Caco-2 (cell line): ENCODE measurements at regions of chr4 and their contacts with region 1.

Region 1: DNA sequence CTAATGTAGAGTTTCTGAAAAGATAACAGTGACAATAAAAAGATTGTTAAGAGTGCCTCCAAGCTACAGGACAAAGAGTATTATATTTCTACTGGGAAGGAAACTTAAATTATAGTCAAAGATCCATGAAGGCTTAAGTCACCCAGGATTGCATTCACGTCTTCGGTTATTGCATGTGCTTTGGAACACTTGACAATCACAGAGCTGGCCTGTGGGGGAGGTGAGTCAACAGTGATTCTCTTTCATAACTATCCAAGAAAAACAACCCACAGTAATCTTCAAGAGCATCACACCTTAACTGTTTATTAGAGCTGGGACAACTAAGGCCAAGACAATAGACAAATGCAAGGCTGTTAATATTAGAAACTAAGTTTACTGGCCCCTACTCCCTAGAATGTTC is 40.3 kb downstream of the PDGFC start:
- DNase-seq: peak; percentile 37 to 61
- H3K4me3 ChIP-seq: no peak overlapping the region
- H3K4me3 Mint-ChIP-seq: no peak overlapping the region
- H3K27ac Mint-ChIP-seq: peak overlapping the region; percentile 94
- H3K4me1 ChIP-seq: peaks cover 20% of the 10 kb centered on the region
- H3K4me1 Mint-ChIP-seq: peaks cover 13% of the 10 kb centered on the region
- H3K27me3 ChIP-seq: no peaks in the 10 kb centered on the region
- H3K27me3 Mint-ChIP-seq: no peaks in the 10 kb centered on the region
- CTCF ChIP-seq: no peak

Region 2: DNA sequence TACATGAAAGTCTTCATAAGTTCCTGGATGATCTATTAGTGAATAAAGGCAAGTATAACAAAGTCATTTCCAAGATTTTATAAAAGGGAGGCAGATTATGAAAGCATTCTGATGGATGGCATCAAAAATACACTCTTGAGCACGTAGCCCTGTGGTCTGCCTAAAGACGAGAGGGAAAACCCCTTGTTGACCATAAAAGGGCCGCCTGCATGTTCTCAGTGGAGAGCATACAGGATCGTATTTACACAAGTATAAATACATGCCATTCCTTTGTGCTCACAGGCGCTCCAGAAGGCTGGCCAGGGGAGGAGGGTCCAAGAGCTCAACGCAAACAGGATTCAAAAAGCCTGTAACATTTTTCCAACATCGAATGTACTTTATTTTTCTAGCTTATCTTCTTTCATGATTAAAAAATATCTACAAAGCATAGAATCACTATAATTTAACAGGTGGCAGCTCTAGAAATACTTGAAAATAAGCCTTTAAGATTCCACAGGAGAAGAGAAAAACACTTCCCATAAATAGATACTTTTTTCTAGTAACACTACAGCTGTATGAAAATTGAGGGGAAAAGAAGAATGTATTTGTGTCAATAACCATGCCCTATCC is 10.8 kb after region 1 on chr4:
- CTCF ChIA-PET with region 1: no interaction called
- POLR2A ChIA-PET with region 1: no interaction called
- intact Hi-C with region 1: loop called (anchors 1 kb)
- DNase-seq: peak; percentile 78 to 89
- H3K4me3 ChIP-seq: no peak overlapping the region
- H3K4me3 Mint-ChIP-seq: peak overlapping the region; percentile 61
- H3K27ac Mint-ChIP-seq: peak overlapping the region; percentile 88
- H3K4me1 ChIP-seq: peaks cover 20% of the 10 kb centered on the region
- H3K4me1 Mint-ChIP-seq: peaks cover 19% of the 10 kb centered on the region
- H3K27me3 ChIP-seq: no peaks in the 10 kb centered on the region
- H3K27me3 Mint-ChIP-seq: no peaks in the 10 kb centered on the region
- CTCF ChIP-seq: no peak

Region 3: DNA sequence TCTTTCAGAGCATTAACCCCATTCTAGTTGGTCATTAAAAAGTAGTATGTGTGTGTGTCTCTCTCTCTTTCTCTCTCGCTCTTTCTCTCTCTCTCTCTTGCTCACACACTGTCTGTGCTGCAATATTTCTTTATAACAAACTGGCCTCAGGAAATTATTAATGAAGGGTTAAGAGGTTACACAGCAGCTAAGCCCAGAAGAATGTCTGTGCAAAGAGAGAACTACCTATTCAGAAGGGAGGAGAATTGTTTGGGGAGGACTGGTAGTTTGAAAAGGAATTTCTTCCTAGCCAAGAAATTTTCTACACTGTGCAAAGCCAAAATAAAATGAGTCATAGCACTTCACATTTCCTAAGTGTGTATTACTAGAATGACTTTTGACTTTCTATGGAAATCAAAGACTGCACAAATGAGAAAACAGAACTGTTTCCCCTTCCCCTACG is 18.1 kb after region 1 on chr4:
- CTCF ChIA-PET with region 1: no interaction called
- POLR2A ChIA-PET with region 1: no interaction called
- intact Hi-C with region 1: loop called (anchors 1 kb)
- DNase-seq: peak in 1 of 2 experiments; percentile 54
- H3K4me3 ChIP-seq: no peak overlapping the region
- H3K4me3 Mint-ChIP-seq: peak overlapping the region; percentile 51
- H3K27ac Mint-ChIP-seq: peak overlapping the region; percentile 58
- H3K4me1 ChIP-seq: peaks cover 30% of the 10 kb centered on the region
- H3K4me1 Mint-ChIP-seq: peaks cover 23% of the 10 kb centered on the region
- H3K27me3 ChIP-seq: no peaks in the 10 kb centered on the region
- H3K27me3 Mint-ChIP-seq: no peaks in the 10 kb centered on the region
- CTCF ChIP-seq: no peak